Sigmoid colon (tissue), 7 donors: ENCODE measurements at regions of chr5 and their contacts with region 1.

Region 1: GRCh38 chr5:179732417-179732917 is at the start of gene MAML1:
- DNase-seq: peak; percentile 100
- H3K4me3 ChIP-seq: peak within 1 kb of the TSS; percentile 62 to 91 (median 84)
- H3K27ac ChIP-seq: peak within 1 kb of the TSS; percentile 95 to 99 (median 96)
- H3K4me1 ChIP-seq: peaks cover 0 to 48% (median 43%) of the 10 kb centered on the region in 4 donors
- H3K27me3 ChIP-seq: no peaks in the 10 kb centered on the region
- CTCF ChIP-seq: no peak
- EP300 ChIP-seq: no peak
- POLR2A ChIP-seq: peak; percentile 25 to 30
- total RNA-seq, gene MAML1: 18.1 to 30.2 (median 25.9) TPM

Region 2: GRCh38 chr5:179697993-179698934 is 34.2 kb before region 1 on chr5:
- intact Hi-C with region 1: loop called (anchors 1 kb)
- DNase-seq: peak; percentile 100
- H3K4me3 ChIP-seq: peak overlapping the region; percentile 70 to 92 (median 80)
- H3K27ac ChIP-seq: peak overlapping the region; percentile 93 to 98 (median 96)
- H3K4me1 ChIP-seq: peaks cover 0 to 53% (median 30%) of the 10 kb centered on the region in 4 donors
- H3K27me3 ChIP-seq: no peaks in the 10 kb centered on the region
- CTCF ChIP-seq: no peak
- EP300 ChIP-seq: no peak
- POLR2A ChIP-seq: peak; percentile 87 to 93